ENCODE measurements at regions of chr10 and their contacts with region 1.

Region 1: GRCh38 chr10:71383972-71384687 is 12.6 kb upstream of the CDH23 start:
- DNase-seq: peak; percentile 56 to 83 (median 76)
- ATAC-seq: peak; percentile 89
- H3K4me3 ChIP-seq: no peak overlapping the region
- H3K4me3 Mint-ChIP-seq: no peak overlapping the region
- H3K27ac ChIP-seq: no peak overlapping the region
- H3K27ac Mint-ChIP-seq: no peak overlapping the region
- H3K4me1 ChIP-seq: no peaks in the 10 kb centered on the region
- H3K4me1 Mint-ChIP-seq: no peaks in the 10 kb centered on the region
- H3K27me3 ChIP-seq: peaks cover 0 to 3% of the 10 kb centered on the region in 2 experiments
- H3K27me3 Mint-ChIP-seq: no peaks in the 10 kb centered on the region
- CTCF ChIP-seq: peak; percentile 83

Region 2: DNA sequence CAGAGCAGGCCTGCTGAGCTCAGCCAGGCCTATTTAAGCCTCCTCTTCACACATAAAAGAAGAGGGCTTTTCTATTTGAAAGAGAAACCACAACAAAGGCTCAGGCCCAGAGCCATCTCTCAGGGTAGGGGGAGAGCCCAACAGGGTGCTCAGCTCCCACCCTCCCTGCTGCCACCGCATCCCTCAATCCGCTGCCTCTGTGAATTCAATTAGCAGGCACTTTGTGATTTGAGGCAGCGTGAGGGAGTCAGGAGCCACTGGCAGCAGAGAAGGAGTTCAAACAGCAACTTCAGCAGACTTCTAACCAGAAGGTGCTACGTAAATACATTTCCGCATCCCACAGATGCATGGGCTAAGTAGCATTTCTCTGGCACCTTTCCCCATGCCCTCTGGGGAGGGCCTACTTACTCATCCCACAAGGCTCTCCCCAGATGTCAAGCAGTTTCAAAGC is 1046.9 kb before region 1 on chr10:
- CTCF ChIA-PET with region 1: no interaction called
- POLR2A ChIA-PET with region 1: no interaction called
- intact Hi-C with region 1: no loop called
- DNase-seq: no peak
- ATAC-seq: no peak
- H3K4me3 ChIP-seq: no peak overlapping the region
- H3K4me3 Mint-ChIP-seq: no peak overlapping the region
- H3K27ac ChIP-seq: no peak overlapping the region
- H3K27ac Mint-ChIP-seq: no peak overlapping the region
- H3K4me1 ChIP-seq: peaks cover 3% of the 10 kb centered on the region
- H3K4me1 Mint-ChIP-seq: peaks cover 7% of the 10 kb centered on the region
- H3K27me3 ChIP-seq: no peaks in the 10 kb centered on the region
- H3K27me3 Mint-ChIP-seq: no peaks in the 10 kb centered on the region
- CTCF ChIP-seq: no peak

Region 3: GRCh38 chr10:71314028-71314693 is 70.0 kb before region 1 on chr10:
- CTCF ChIA-PET with region 1: interaction called, 8 read pairs
- POLR2A ChIA-PET with region 1: no interaction called
- intact Hi-C with region 1: loop called in 1 of 2 experiments (anchors 2 kb)
- DNase-seq: peak in 8 of 9 experiments; percentile 41 to 80 (median 62)
- ATAC-seq: peak; percentile 45
- H3K4me3 ChIP-seq: no peak overlapping the region
- H3K4me3 Mint-ChIP-seq: no peak overlapping the region
- H3K27ac ChIP-seq: no peak overlapping the region
- H3K27ac Mint-ChIP-seq: no peak overlapping the region
- H3K4me1 ChIP-seq: peaks cover 6% of the 10 kb centered on the region
- H3K4me1 Mint-ChIP-seq: peaks cover 11% of the 10 kb centered on the region
- H3K27me3 ChIP-seq: no peaks in the 10 kb centered on the region
- H3K27me3 Mint-ChIP-seq: peaks cover 7% of the 10 kb centered on the region
- CTCF ChIP-seq: peak; percentile 86

Region 4: DNA sequence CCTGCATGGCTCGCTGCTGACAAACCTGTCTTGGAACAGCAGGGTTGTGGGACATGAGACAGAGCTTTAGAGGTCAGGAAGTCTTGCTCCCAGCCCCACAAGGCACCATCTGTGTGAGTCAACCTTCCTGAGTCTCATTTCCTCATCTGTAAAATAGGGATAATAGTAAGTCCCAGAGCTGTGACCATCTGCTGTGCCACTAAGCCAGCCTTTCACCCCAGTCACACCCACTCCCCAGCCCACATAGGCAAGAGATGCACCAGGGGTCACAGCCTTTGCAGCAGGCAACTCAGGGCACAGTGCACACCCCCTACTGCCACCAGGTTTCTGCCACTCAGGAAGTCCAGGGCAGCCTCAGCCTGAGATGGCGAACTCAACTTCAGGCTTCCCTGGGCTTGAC is 16.9 kb before region 1 on chr10:
- CTCF ChIA-PET with region 1: interaction called, 17 read pairs
- POLR2A ChIA-PET with region 1: no interaction called
- intact Hi-C with region 1: no loop called
- DNase-seq: no peak
- ATAC-seq: no peak
- H3K4me3 ChIP-seq: no peak overlapping the region
- H3K4me3 Mint-ChIP-seq: no peak overlapping the region
- H3K27ac ChIP-seq: no peak overlapping the region
- H3K27ac Mint-ChIP-seq: no peak overlapping the region
- H3K4me1 ChIP-seq: no peaks in the 10 kb centered on the region
- H3K4me1 Mint-ChIP-seq: no peaks in the 10 kb centered on the region
- H3K27me3 ChIP-seq: no peaks in the 10 kb centered on the region
- H3K27me3 Mint-ChIP-seq: peaks cover 6% of the 10 kb centered on the region
- CTCF ChIP-seq: no peak

Region 5: GRCh38 chr10:71372882-71373495 is 11.1 kb before region 1 on chr10:
- CTCF ChIA-PET with region 1: interaction called, 23 read pairs
- POLR2A ChIA-PET with region 1: no interaction called
- intact Hi-C with region 1: no loop called
- DNase-seq: no peak
- ATAC-seq: no peak
- H3K4me3 ChIP-seq: no peak overlapping the region
- H3K4me3 Mint-ChIP-seq: no peak overlapping the region
- H3K27ac ChIP-seq: no peak overlapping the region
- H3K27ac Mint-ChIP-seq: no peak overlapping the region
- H3K4me1 ChIP-seq: peaks cover 6% of the 10 kb centered on the region
- H3K4me1 Mint-ChIP-seq: peaks cover 9% of the 10 kb centered on the region
- H3K27me3 ChIP-seq: no peaks in the 10 kb centered on the region
- H3K27me3 Mint-ChIP-seq: peaks cover 8% of the 10 kb centered on the region
- CTCF ChIP-seq: no peak

Region 6: DNA sequence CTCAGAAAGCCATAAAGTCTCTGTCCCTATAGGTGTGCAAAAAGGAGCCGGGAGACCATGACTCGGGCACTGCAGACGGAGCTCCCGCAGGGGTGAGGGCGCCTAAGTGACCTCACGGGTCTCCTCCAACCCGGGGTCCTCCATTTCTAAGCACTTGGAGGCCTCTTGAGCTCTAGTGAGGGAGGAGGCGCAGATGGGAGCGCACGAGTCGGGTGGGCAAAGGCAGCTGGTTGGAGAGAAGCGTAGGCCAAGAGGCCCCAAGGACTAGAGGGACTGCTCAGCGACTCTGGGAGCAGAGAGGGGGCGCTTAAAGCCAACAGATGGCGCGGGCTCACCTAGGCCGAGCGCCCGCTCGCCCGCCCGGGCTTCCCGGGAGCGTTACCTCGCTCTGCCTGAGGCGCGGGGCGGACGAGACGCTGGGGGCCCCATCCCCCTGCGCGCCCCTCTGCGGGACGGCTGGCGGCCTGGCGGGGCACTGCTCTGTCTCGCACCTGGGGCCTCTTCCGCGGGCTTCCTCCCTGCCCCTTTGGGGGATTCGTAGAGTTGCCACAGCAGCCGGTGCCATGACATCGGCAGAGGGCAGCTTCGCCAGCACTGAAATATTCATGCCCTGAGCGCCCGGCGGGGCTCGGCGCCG is 12.1 kb after region 1 on chr10:
- CTCF ChIA-PET with region 1: interaction called, 26 read pairs
- POLR2A ChIA-PET with region 1: no interaction called
- intact Hi-C with region 1: no loop called
- DNase-seq: peak in 5 of 9 experiments; percentile 24 to 63 (median 54)
- ATAC-seq: peak; percentile 64
- H3K4me3 ChIP-seq: peak overlapping the region; percentile 32 to 39
- H3K4me3 Mint-ChIP-seq: peak overlapping the region; percentile 72
- H3K27ac ChIP-seq: no peak overlapping the region
- H3K27ac Mint-ChIP-seq: no peak overlapping the region
- H3K4me1 ChIP-seq: peaks cover 14% of the 10 kb centered on the region
- H3K4me1 Mint-ChIP-seq: peaks cover 8% of the 10 kb centered on the region
- H3K27me3 ChIP-seq: peaks cover 15 to 18% of the 10 kb centered on the region in 2 experiments
- H3K27me3 Mint-ChIP-seq: peaks cover 56% of the 10 kb centered on the region
- CTCF ChIP-seq: no peak

Region 7: GRCh38 chr10:71608819-71609768 is 225.0 kb after region 1 on chr10:
- CTCF ChIA-PET with region 1: interaction called, 5 read pairs
- POLR2A ChIA-PET with region 1: no interaction called
- intact Hi-C with region 1: loop called in 1 of 2 experiments (anchors 1 kb)
- DNase-seq: peak; percentile 34 to 69 (median 63)
- ATAC-seq: peak; percentile 52
- H3K4me3 ChIP-seq: no peak overlapping the region
- H3K4me3 Mint-ChIP-seq: no peak overlapping the region
- H3K27ac ChIP-seq: no peak overlapping the region
- H3K27ac Mint-ChIP-seq: no peak overlapping the region
- H3K4me1 ChIP-seq: no peaks in the 10 kb centered on the region
- H3K4me1 Mint-ChIP-seq: no peaks in the 10 kb centered on the region
- H3K27me3 ChIP-seq: no peaks in the 10 kb centered on the region
- H3K27me3 Mint-ChIP-seq: peaks cover 13% of the 10 kb centered on the region
- CTCF ChIP-seq: peak; percentile 60

Measured in CD8-positive, alpha-beta T cell (primary cell).